Caco-2 (cell line): ENCODE measurements at regions of chr2 and their contacts with region 1.

Region 1: DNA sequence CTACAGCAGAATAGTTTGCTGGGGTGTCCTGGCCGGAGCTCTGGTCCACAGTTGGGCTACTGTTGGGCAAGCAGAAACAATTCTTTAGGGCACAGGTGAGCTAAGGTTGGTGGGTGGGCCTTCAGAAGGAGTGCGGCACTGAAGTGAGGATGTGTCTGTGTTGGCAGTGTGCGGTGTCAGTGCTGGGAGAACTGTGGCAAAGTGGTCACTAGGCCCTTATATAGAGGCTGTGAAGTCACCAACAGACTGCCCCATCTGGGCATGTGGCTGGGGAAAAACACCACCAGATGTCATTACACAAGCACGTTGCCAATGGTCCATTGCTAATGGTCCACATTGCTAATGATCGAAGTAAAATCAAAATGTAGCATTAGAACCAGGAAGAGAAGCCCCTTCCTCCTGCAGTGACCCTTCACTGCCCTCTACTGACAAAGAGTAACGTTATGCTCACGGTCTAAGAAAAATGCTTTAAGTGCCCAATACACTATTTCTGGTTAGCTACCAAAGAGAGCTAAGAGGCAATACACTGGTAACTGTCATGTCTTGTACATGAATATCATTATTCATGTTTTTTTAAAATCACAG is 21.3 kb downstream of the SCN1A start:
- DNase-seq: peak in 1 of 2 experiments; percentile 9
- H3K4me3 ChIP-seq: no peak overlapping the region
- H3K4me3 Mint-ChIP-seq: no peak overlapping the region
- H3K27ac Mint-ChIP-seq: no peak overlapping the region
- H3K4me1 ChIP-seq: no peaks in the 10 kb centered on the region
- H3K4me1 Mint-ChIP-seq: no peaks in the 10 kb centered on the region
- H3K27me3 ChIP-seq: no peaks in the 10 kb centered on the region
- H3K27me3 Mint-ChIP-seq: no peaks in the 10 kb centered on the region
- CTCF ChIP-seq: peak; percentile 16 to 51

Region 2: GRCh38 chr2:166057370-166058164 is 49.0 kb before region 1 on chr2:
- CTCF ChIA-PET with region 1: no interaction called
- POLR2A ChIA-PET with region 1: no interaction called
- intact Hi-C with region 1: loop called (anchors 1 kb)
- DNase-seq: peak in 1 of 2 experiments; percentile 5
- H3K4me3 ChIP-seq: no peak overlapping the region
- H3K4me3 Mint-ChIP-seq: no peak overlapping the region
- H3K27ac Mint-ChIP-seq: no peak overlapping the region
- H3K4me1 ChIP-seq: no peaks in the 10 kb centered on the region
- H3K4me1 Mint-ChIP-seq: no peaks in the 10 kb centered on the region
- H3K27me3 ChIP-seq: no peaks in the 10 kb centered on the region
- H3K27me3 Mint-ChIP-seq: peaks cover 4% of the 10 kb centered on the region
- CTCF ChIP-seq: peak; percentile 53 to 58

Region 3: GRCh38 chr2:166332106-166332505 is 225.6 kb after region 1 on chr2:
- CTCF ChIA-PET with region 1: no interaction called
- POLR2A ChIA-PET with region 1: no interaction called
- intact Hi-C with region 1: no loop called
- DNase-seq: no peak
- H3K4me3 ChIP-seq: no peak overlapping the region
- H3K4me3 Mint-ChIP-seq: no peak overlapping the region
- H3K27ac Mint-ChIP-seq: no peak overlapping the region
- H3K4me1 ChIP-seq: no peaks in the 10 kb centered on the region
- H3K4me1 Mint-ChIP-seq: peaks cover 6% of the 10 kb centered on the region
- H3K27me3 ChIP-seq: no peaks in the 10 kb centered on the region
- H3K27me3 Mint-ChIP-seq: no peaks in the 10 kb centered on the region
- CTCF ChIP-seq: no peak